ENCODE measurements at regions of chr1 and their contacts with region 1.

Region 1: GRCh38 chr1:53878492-53879105 is 11.0 kb downstream of the YIPF1 start:
- DNase-seq: no peak
- ATAC-seq: no peak
- H3K4me3 ChIP-seq: no peak overlapping the region
- H3K27ac ChIP-seq: no peak overlapping the region
- H3K4me1 ChIP-seq: no peaks in the 10 kb centered on the region
- H3K27me3 ChIP-seq: no peaks in the 10 kb centered on the region

Region 2: GRCh38 chr1:54070171-54070837 is 191.7 kb after region 1 on chr1:
- intact Hi-C with region 1: loop called in 1 of 2 experiments (anchors 10 kb)
- DNase-seq: no peak
- ATAC-seq: no peak
- H3K4me3 ChIP-seq: no peak overlapping the region
- H3K27ac ChIP-seq: no peak overlapping the region
- H3K4me1 ChIP-seq: no peaks in the 10 kb centered on the region
- H3K27me3 ChIP-seq: no peaks in the 10 kb centered on the region

Measured in aorta (tissue), 5 donors.